ENCODE measurements at regions of chr13 and their contacts with region 1.

Region 1: GRCh38 chr13:71867131-71867814 is at the start of gene DACH1:
- ATAC-seq: peak; percentile 49 to 86 (median 70)
- H3K4me3 ChIP-seq: peak within 1 kb of the TSS; percentile 86 to 100 (median 92)
- H3K27ac ChIP-seq: peak within 1 kb of the TSS; percentile 86 to 96
- H3K4me1 ChIP-seq: peaks cover 14 to 40% of the 10 kb centered on the region in 2 donors
- total RNA-seq, gene DACH1: 0.20 to 74.1 (median 38.8) TPM

Region 2: DNA sequence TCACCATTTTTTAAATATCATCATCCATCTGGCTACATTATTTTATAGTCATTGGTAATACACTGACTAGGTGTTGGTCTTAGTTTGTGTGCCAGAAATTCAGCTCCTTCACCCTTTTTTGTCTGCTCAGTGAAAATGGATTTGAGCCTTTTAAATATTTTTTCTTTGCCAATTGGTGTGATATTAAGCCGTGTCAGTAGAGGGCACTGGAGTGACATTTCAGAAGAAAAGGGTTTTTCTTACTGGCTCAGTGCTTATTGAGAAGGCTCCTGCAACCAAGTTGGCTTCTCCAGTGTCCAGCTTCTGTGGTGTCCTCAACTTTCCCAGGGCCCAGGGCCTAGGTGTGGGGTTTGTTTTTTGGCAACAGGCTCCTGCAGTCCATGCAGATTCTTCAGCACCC is 546.8 kb before region 1 on chr13:
- in situ Hi-C with region 1: loop called in 1 of 9 experiments (anchors 25 kb)
- ATAC-seq: peak in 3 of 8 experiments; percentile 18 to 45 (median 34)
- H3K4me3 ChIP-seq: no peak overlapping the region
- H3K27ac ChIP-seq: no peak overlapping the region
- H3K4me1 ChIP-seq: peaks cover 11 to 30% of the 10 kb centered on the region in 2 donors

Region 3: DNA sequence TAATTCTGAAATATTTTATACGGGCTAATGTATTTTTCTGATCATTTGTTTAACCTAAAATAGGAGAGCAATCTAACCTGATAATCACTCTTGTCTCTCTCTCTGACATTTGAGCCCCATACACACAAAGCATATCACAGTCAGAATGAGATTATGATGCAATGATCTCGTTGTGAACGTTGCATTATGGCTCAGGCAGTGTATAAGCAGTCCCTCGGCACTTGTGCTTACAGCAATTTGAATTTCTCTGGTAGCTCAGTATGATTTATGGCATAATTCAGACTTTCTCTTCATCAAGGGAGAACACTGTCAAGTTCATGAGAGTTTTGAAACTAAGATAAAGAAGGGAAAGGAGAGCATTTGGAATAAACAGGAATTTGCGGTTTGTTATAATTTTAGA is 256.4 kb before region 1 on chr13:
- in situ Hi-C with region 1: loop called in 1 of 9 experiments (anchors 25 kb)
- ATAC-seq: peak in 6 of 8 experiments; percentile 39 to 100 (median 98)
- H3K4me3 ChIP-seq: no peak overlapping the region
- H3K27ac ChIP-seq: peak overlapping the region in 1 of 2 donors; percentile 49
- H3K4me1 ChIP-seq: peaks cover 7 to 24% of the 10 kb centered on the region in 2 donors

Region 4: DNA sequence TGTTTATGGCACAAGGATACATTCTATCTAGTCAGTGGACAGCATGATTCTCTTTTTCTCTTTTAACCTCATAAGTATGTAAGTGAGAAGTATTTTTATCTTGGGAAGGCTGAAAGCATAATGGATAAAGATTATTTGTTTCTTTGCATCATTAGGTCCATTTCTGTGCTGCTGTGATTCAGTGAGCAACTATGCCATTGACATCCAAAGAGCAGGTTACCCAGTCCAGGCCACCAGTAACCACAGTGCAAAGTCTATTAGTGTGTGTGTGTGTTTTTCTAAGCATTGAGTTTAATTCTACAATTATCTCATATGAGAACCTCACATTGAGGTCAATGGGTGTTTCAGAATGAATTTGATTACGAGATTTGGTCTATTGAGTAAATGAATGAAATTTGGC is 158.6 kb after region 1 on chr13:
- in situ Hi-C with region 1: no loop called
- ATAC-seq: no peak
- H3K4me3 ChIP-seq: no peak overlapping the region
- H3K27ac ChIP-seq: no peak overlapping the region
- H3K4me1 ChIP-seq: no peaks in the 10 kb centered on the region

Region 5: DNA sequence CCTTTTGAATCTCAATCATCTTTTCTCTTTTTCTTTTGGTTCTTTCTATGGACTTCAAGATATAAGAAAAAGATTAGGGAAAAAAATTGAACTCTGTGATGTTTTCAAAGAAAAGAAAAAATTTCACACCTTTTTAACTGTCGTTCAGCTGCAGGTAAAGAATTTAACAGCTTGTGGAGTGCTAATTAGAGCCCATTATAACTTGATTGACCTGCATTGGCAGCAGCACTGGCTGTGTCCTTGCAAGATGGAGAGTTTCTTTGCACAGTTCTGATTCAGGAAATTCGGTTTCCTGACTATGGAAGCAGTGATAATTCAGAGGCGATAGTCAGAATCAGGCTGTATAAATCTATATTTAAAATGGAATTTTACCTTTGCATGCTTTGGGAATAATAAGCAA is 183.0 kb after region 1 on chr13:
- in situ Hi-C with region 1: no loop called
- ATAC-seq: no peak
- H3K4me3 ChIP-seq: no peak overlapping the region
- H3K27ac ChIP-seq: no peak overlapping the region
- H3K4me1 ChIP-seq: peaks cover 0 to 5% of the 10 kb centered on the region in 2 donors

Measured in motor neuron (in vitro differentiated cells).